HEK293T (cell line): ENCODE measurements at regions of chr5 and their contacts with region 1.

Region 1: GRCh38 chr5:65481635-65482295 is at the start of gene ADAMTS6:
- DNase-seq: peak; percentile 66

Region 2: DNA sequence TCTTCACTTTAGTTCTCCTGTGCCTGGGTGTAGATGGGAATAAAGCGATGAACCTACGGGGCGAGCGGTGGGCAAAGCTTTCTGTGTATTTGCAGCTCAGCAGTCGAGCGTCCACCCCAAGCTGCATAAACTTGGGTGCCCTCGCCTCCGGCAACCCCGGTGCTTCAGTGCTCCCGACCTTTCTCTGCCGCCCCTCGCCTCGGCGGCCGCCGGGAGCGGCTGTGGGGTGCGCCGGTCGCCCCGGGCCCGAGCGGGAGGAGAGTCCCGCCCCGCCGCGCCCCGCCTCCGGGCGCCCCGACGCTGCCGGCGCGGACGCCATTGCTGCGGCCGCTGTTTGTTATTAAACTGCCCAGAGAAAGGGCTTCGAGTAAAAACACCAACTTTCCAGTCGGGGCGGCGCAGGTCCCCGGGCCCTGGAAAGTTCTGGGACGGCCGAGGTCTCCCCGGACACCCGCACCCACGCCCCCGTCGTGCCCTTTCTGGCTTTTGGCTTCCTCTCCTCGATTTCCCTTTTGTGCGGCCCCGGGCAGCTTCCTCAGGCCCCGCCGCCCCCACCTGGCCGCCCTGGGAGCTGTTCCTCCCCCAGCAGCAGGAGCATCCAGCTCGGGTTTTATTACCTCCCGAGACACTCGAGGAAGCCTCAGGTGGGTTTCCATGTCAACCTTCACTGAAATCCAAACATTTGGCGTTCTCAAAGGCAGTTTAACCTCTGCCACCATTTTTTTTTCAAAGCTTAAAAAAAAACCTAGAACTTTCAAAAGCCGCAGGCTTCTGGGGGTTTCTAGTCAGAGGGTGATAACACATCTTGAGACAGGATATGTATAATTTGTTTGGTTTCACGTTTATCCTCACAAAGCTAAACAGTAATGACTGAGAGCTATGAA is 378.7 kb before region 1 on chr5:
- CTCF ChIA-PET with region 1: interaction called, 5 read pairs
- POLR2A ChIA-PET with region 1: interaction called, 16 read pairs
- DNase-seq: peak; percentile 21

Region 3: GRCh38 chr5:65468633-65469032 is 13.1 kb before region 1 on chr5:
- CTCF ChIA-PET with region 1: no interaction called
- POLR2A ChIA-PET with region 1: no interaction called
- DNase-seq: no peak